Dendritic cell treated with granulocyte-macrophage colony-stimulating factor and Interleukin-4, amounts not matched to agents 40 ng/mL and 50 ng/mL, for 4 days (primary cell): ENCODE measurements at regions of chr9 and their contacts with region 1.

Region 1: DNA sequence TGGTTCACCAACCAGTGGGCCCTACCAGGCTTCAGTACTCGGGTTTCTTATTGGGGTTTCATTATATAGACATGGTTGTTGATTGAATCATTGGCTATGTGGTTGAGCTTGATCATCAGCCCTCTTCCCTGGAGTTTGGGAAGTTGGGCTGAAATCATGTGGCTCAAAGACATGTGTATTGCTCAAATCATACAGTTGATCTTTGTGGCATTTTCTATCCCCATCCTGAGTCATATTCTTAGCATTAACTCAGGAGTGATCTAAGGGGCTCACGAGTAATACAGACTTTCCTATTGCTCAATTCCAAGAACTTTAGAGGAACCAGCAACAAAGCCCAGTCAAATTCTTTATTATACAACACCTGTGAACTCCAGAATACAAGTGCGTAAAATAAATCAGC is 66.2 kb downstream of the SMC5 start:
- H3K4me3 Mint-ChIP-seq: no peak overlapping the region
- H3K27ac Mint-ChIP-seq: no peak overlapping the region
- H3K4me1 Mint-ChIP-seq: peaks cover 7% of the 10 kb centered on the region
- H3K27me3 Mint-ChIP-seq: no peaks in the 10 kb centered on the region

Region 2: GRCh38 chr9:70229579-70229978 is 95.4 kb before region 1 on chr9:
- intact Hi-C with region 1: no loop called
- H3K4me3 Mint-ChIP-seq: no peak overlapping the region
- H3K27ac Mint-ChIP-seq: no peak overlapping the region
- H3K4me1 Mint-ChIP-seq: no peaks in the 10 kb centered on the region
- H3K27me3 Mint-ChIP-seq: no peaks in the 10 kb centered on the region

Region 3: DNA sequence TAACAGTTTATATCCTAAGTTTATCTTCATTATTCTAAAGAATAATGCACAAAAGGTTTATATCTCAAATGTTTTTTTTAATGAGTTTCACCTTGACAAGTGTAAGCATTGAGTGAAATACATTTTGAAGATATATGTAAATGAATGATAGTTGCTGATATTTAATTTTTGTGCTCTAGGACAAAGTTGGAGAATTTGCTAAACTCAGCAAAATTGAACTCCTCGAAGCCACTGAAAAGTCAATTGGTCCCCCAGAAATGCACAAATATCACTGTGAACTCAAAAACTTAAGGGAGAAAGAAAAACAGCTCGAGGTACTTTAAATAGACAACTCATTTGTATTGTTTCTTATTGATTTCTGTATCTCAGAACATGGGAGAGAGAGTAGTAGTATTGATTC is 46.7 kb before region 1 on chr9:
- intact Hi-C with region 1: loop called (anchors 5 kb)
- H3K4me3 Mint-ChIP-seq: no peak overlapping the region
- H3K27ac Mint-ChIP-seq: no peak overlapping the region
- H3K4me1 Mint-ChIP-seq: peaks cover 12% of the 10 kb centered on the region
- H3K27me3 Mint-ChIP-seq: no peaks in the 10 kb centered on the region

Region 4: DNA sequence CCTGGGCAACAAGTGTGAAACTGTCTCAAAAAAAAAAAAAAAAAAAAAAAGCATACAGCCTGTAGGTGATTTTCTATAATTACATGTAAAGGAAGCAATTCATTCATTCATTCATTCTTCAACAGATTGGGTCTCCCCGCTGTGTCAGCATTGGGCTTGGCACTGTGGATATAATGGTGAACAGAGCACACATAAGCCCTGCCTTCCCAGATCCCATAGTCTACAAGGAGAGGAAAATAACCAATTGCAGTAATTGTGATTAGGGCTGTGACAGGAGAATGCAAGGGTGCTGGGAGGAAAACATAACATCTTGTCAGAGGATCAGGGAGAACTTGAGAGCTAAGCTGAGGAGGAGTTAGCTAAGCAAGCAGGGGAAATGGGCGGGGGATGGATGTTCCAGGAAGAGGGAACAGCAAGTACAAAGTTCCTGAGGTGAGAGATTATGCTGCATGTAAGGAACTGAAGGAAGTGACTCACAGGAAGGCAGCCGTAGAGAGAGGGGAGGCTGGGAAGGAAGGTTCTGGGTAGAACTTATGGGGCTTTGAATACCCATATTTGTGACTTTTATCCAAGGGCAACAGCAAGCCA is 113.5 kb after region 1 on chr9:
- intact Hi-C with region 1: no loop called
- H3K4me3 Mint-ChIP-seq: no peak overlapping the region
- H3K27ac Mint-ChIP-seq: peak overlapping the region; percentile 36
- H3K4me1 Mint-ChIP-seq: peaks cover 27% of the 10 kb centered on the region
- H3K27me3 Mint-ChIP-seq: no peaks in the 10 kb centered on the region